ENCODE measurements at regions of chr3 and their contacts with region 1.

Region 1: GRCh38 chr3:73508330-73508954 is 116.3 kb downstream of the PDZRN3 start:
- DNase-seq: peak in 2 of 5 donors; percentile 43 to 52
- ATAC-seq: peak; percentile 47 to 72 (median 59)
- H3K4me3 ChIP-seq: no peak overlapping the region
- H3K27ac ChIP-seq: peak overlapping the region in 10 of 12 donors; percentile 6 to 85 (median 48)
- H3K4me1 ChIP-seq: peaks cover 0 to 73% (median 33%) of the 10 kb centered on the region in 12 donors
- H3K27me3 ChIP-seq: no peaks in the 10 kb centered on the region
- CTCF ChIP-seq: peak; percentile 65 to 79 (median 76)
- POLR2A ChIP-seq: no peak

Region 2: GRCh38 chr3:73389117-73389813 is 119.2 kb before region 1 on chr3:
- intact Hi-C with region 1: no loop called
- DNase-seq: no peak
- ATAC-seq: no peak
- H3K4me3 ChIP-seq: no peak overlapping the region
- H3K27ac ChIP-seq: no peak overlapping the region
- H3K4me1 ChIP-seq: no peaks in the 10 kb centered on the region
- H3K27me3 ChIP-seq: no peaks in the 10 kb centered on the region
- CTCF ChIP-seq: no peak
- POLR2A ChIP-seq: no peak

Region 3: DNA sequence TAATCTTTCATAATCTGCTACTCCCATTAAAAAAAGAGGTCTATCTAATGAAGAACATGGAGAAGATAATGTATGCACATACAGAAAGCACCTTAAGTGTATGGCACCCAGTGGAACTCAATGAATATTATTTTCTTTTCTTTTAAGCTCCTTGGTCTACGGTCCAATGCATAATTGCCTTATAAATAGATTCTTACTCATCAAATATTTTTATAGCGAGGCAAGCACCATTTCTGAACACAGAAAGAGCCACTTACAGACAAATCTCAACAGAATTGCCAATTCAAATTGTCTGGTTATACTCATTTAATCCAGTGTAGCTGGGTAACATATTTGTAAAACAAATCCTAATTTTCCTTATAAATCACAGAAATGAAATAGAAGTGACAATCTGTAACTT is 110.0 kb after region 1 on chr3:
- intact Hi-C with region 1: loop called in 8 of 10 experiments (anchors 2 to 5 kb)
- DNase-seq: no peak
- ATAC-seq: no peak
- H3K4me3 ChIP-seq: no peak overlapping the region
- H3K27ac ChIP-seq: peak overlapping the region; percentile 1 to 94 (median 68)
- H3K4me1 ChIP-seq: peaks cover 0 to 63% (median 28%) of the 10 kb centered on the region in 12 donors
- H3K27me3 ChIP-seq: peaks cover 0 to under 1% (median 0%) of the 10 kb centered on the region in 9 donors
- CTCF ChIP-seq: no peak
- POLR2A ChIP-seq: no peak

Region 4: DNA sequence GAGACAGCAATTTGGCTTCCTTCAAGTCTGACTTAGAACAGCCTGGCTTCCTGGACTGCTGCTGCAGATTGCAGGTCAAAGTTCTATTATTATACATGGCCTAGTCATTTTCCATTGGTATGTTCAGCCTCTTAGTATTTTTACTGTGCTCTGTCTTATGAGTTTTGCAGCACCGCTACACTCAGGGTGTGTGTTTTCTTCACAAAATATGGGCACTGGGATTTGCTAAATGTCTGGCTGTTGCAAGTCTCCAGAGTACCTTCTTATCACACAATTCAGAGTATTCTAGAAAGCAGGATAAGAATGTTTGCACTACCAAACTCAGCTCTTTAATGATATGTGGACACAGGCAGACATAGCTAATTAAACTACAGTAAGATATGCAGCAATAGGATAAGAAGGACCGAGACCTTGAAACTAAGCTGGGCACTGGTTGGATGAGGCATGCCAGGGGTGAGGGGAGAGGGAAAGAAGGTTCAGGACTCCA is 319.3 kb after region 1 on chr3:
- intact Hi-C with region 1: loop called in 1 of 10 experiments (anchors 10 kb)
- DNase-seq: peak in 1 of 5 donors; percentile 31
- ATAC-seq: peak; percentile 83 to 89 (median 86)
- H3K4me3 ChIP-seq: no peak overlapping the region
- H3K27ac ChIP-seq: peak overlapping the region; percentile 24 to 87 (median 74)
- H3K4me1 ChIP-seq: peaks cover 0 to 28% (median 16%) of the 10 kb centered on the region in 12 donors
- H3K27me3 ChIP-seq: no peaks in the 10 kb centered on the region
- CTCF ChIP-seq: no peak
- POLR2A ChIP-seq: no peak

Measured in heart left ventricle (tissue), 16 donors.